OCI-LY7 (cell line): ENCODE measurements at regions of chr16 and their contacts with region 1.

Region 1: DNA sequence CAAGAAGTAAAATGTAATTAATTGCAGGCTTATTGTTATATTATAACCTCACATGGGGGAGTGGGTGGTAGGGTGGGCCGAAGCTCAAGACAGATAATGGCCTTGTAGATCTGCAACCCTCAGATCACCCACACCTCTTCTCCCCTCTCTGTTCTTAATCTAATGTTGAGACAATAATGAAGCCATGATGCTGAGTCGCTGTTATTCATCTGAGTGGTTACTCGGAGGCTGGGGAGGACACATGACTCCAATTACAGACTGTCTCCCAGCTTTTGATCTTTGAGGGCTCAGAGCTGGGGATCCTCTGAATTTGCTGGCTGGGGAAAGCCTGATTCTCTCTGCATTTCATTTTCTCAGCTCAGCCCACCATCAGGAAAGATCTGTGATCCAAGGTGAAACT is 275.3 kb downstream of the SHISA9 start:
- DNase-seq: no peak
- H3K4me3 ChIP-seq: no peak overlapping the region
- H3K27ac ChIP-seq: no peak overlapping the region
- H3K4me1 ChIP-seq: peaks cover 5% of the 10 kb centered on the region
- CTCF ChIP-seq: no peak

Region 2: GRCh38 chr16:13441675-13442074 is 265.0 kb after region 1 on chr16:
- CTCF ChIA-PET with region 1: no interaction called
- POLR2A ChIA-PET with region 1: no interaction called
- intact Hi-C with region 1: loop called (anchors 10 kb)
- DNase-seq: no peak
- H3K4me3 ChIP-seq: no peak overlapping the region
- H3K27ac ChIP-seq: no peak overlapping the region
- H3K4me1 ChIP-seq: peaks cover 5% of the 10 kb centered on the region
- CTCF ChIP-seq: no peak